Activated T-helper 1 cell treated with anti-CD3 and anti-CD28 coated beads, Interleukin-12 subunit alpha, Interleukin-12 subunit beta, Interleukin-2, Interleukin-4 antibody, amounts not matched to agents 30 ng/mL and 10 ng/mL and 1 ng/mL, durations not matched to agents 14 hours and 24 hours and 36 hours (primary cell): ENCODE measurements at regions of chr18 and their contacts with region 1.

Region 1: DNA sequence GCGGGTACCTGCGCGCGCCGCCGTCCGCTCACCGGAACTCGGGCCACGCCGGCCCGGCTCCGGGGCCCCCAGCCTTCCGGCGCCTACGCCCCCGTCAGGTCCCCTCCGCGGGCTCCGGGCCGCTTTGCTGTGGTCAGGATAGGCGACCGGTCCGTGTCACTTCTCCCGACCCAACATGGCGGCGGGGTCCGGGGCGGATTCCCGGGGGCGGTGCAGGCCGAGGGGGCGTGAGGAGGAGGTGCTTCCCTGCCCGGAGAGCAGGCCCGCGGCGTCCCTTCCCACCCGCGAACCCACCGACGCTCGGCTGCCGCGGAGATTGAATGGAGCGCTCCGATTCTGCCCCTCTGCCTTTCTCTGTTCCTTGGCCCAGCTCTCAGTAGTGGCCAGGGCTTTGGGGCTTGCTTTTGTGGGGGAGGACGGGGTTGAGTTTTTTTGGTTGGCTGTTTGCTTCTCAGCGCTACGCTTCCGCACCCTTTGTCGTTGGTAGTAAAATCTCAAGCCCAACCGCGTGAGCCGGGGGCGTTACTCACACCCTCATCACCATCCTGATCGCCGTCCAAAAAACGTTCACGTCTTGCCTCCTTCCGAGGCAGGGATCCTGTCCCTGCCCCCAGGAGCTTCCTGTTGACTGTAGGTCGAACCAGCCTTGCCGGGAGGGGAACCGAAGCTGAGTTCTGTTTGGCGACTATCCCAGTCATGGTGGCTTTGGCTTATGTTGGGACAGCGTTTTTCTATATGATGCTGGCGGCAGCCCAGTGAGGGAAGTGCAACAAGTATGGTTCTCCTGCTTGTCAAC is 532 bp upstream of the YES1 start:
- DNase-seq: peak; percentile 81
- H3K4me3 Mint-ChIP-seq: peak overlapping the region; percentile 90
- H3K27ac Mint-ChIP-seq: peak overlapping the region; percentile 99
- H3K4me1 Mint-ChIP-seq: peaks cover 64% of the 10 kb centered on the region
- H3K27me3 Mint-ChIP-seq: no peaks in the 10 kb centered on the region

Region 2: GRCh38 chr18:596288-596881 is 216.2 kb before region 1 on chr18:
- intact Hi-C with region 1: loop called (anchors 5 kb)
- DNase-seq: no peak
- H3K4me3 Mint-ChIP-seq: no peak overlapping the region
- H3K27ac Mint-ChIP-seq: no peak overlapping the region
- H3K4me1 Mint-ChIP-seq: peaks cover 14% of the 10 kb centered on the region
- H3K27me3 Mint-ChIP-seq: peaks cover 20% of the 10 kb centered on the region

Region 3: GRCh38 chr18:681985-682384 is 130.6 kb before region 1 on chr18:
- intact Hi-C with region 1: loop called (anchors 1 kb)
- DNase-seq: peak; percentile 71
- H3K4me3 Mint-ChIP-seq: peak overlapping the region; percentile 30
- H3K27ac Mint-ChIP-seq: peak overlapping the region; percentile 87
- H3K4me1 Mint-ChIP-seq: peaks cover 25% of the 10 kb centered on the region
- H3K27me3 Mint-ChIP-seq: no peaks in the 10 kb centered on the region

Region 4: DNA sequence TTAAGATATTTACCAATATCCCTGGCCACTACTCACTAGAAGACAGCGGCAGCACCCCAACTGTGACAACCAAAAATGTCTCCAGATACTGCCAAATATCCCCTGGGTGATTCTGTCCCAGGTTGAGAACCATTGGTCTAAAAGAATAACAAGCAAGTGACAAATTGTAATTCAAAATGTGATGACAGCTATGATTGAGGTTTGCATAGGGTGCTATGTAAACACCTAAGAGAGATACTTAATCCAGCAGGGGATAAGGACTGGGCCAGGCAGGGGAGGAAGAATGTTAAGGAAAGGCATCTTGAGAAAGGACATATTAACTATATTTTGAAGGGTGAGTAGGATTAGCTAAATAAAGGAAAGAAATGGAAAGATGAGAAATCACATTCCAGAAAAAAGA is 62.1 kb before region 1 on chr18:
- intact Hi-C with region 1: no loop called
- DNase-seq: no peak
- H3K4me3 Mint-ChIP-seq: no peak overlapping the region
- H3K27ac Mint-ChIP-seq: no peak overlapping the region
- H3K4me1 Mint-ChIP-seq: no peaks in the 10 kb centered on the region
- H3K27me3 Mint-ChIP-seq: no peaks in the 10 kb centered on the region

Region 5: GRCh38 chr18:830315-830901 is 17.8 kb after region 1 on chr18:
- intact Hi-C with region 1: loop called (anchors 1 kb)
- DNase-seq: peak; percentile 9
- H3K4me3 Mint-ChIP-seq: no peak overlapping the region
- H3K27ac Mint-ChIP-seq: peak overlapping the region; percentile 49
- H3K4me1 Mint-ChIP-seq: peaks cover 12% of the 10 kb centered on the region
- H3K27me3 Mint-ChIP-seq: peaks cover 4% of the 10 kb centered on the region